CD4-positive, alpha-beta T cell (primary cell): ENCODE measurements at regions of chr17 and their contacts with region 1.

Region 1: GRCh38 chr17:78075545-78075944 is 53.0 kb downstream of the TMC6 start:
- DNase-seq: no peak
- ATAC-seq: no peak
- H3K4me3 ChIP-seq: no peak overlapping the region
- H3K4me3 Mint-ChIP-seq: no peak overlapping the region
- H3K27ac ChIP-seq: no peak overlapping the region
- H3K27ac Mint-ChIP-seq: no peak overlapping the region
- H3K4me1 ChIP-seq: no peaks in the 10 kb centered on the region
- H3K4me1 Mint-ChIP-seq: no peaks in the 10 kb centered on the region
- H3K27me3 ChIP-seq: no peaks in the 10 kb centered on the region
- H3K27me3 Mint-ChIP-seq: no peaks in the 10 kb centered on the region
- CTCF ChIP-seq: no peak

Region 2: GRCh38 chr17:78034429-78035091 is 41.0 kb before region 1 on chr17:
- CTCF ChIA-PET with region 1: no interaction called
- POLR2A ChIA-PET with region 1: no interaction called
- intact Hi-C with region 1: loop called in 1 of 2 experiments (anchors 5 kb)
- DNase-seq: no peak
- ATAC-seq: no peak
- H3K4me3 ChIP-seq: no peak overlapping the region
- H3K4me3 Mint-ChIP-seq: no peak overlapping the region
- H3K27ac ChIP-seq: no peak overlapping the region
- H3K27ac Mint-ChIP-seq: no peak overlapping the region
- H3K4me1 ChIP-seq: peaks cover 1% of the 10 kb centered on the region
- H3K4me1 Mint-ChIP-seq: peaks cover 14% of the 10 kb centered on the region
- H3K27me3 ChIP-seq: no peaks in the 10 kb centered on the region
- H3K27me3 Mint-ChIP-seq: no peaks in the 10 kb centered on the region
- CTCF ChIP-seq: no peak